H1 (cell line): ENCODE measurements at regions of chr21 and their contacts with region 1.

Region 1: DNA sequence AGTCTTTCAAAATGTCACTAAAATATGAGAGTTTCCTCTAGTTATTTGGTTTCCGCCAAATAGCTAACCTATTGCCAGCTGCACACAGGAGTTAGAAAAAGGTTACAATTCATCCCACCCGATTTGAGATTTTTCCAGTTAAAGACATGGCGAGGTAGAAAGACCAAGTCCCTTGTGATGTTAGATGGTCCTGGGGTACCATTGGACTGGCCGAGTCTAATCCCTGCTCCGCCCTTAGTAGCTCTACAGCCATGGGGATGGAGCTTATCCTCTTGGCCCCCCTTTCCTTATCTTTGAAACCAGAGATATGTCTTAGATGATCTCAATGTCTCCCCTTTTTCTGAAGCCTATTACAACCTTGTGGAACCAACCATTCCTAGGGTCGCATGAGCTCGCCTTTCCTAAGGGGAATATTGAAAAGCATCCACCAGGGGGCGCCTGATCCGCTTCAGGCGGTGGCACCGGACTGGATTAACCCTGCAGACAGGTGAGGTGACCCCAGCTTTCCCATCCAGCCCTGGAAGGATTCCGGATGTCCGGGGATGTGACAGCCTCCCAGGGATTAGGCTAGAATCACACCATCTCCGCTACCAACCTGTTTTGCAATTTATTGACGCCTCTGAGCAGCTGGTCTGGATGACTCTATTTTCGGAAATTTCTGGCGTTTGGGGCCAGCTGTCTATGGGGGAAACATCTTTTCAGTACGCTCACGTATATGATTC is 68.3 kb upstream of the SIM2 start:
- DNase-seq: peak; percentile 64 to 96
- H3K4me3 ChIP-seq: no peak overlapping the region
- H3K27ac ChIP-seq: no peak overlapping the region
- H3K4me1 ChIP-seq: no peaks in the 10 kb centered on the region
- H3K27me3 ChIP-seq: peaks cover 0 to 7% (median 0%) of the 10 kb centered on the region in 4 experiments; a peak in 2 of 7 replicates
- CTCF ChIP-seq: peak; percentile 82 to 88 (median 84)
- EP300 ChIP-seq: no peak
- POLR2A ChIP-seq: no peak
- RAD21 ChIP-seq: peak; percentile 74 to 79

Region 2: GRCh38 chr21:36587382-36587781 is 43.3 kb before region 1 on chr21:
- CTCF ChIA-PET with region 1: interaction called, 12 read pairs
- POLR2A ChIA-PET with region 1: no interaction called
- DNase-seq: no peak
- H3K4me3 ChIP-seq: no peak overlapping the region
- H3K27ac ChIP-seq: no peak overlapping the region
- H3K4me1 ChIP-seq: no peaks in the 10 kb centered on the region
- H3K27me3 ChIP-seq: no peaks in the 10 kb centered on the region
- CTCF ChIP-seq: no peak
- EP300 ChIP-seq: no peak
- POLR2A ChIP-seq: no peak
- RAD21 ChIP-seq: no peak

Region 3: DNA sequence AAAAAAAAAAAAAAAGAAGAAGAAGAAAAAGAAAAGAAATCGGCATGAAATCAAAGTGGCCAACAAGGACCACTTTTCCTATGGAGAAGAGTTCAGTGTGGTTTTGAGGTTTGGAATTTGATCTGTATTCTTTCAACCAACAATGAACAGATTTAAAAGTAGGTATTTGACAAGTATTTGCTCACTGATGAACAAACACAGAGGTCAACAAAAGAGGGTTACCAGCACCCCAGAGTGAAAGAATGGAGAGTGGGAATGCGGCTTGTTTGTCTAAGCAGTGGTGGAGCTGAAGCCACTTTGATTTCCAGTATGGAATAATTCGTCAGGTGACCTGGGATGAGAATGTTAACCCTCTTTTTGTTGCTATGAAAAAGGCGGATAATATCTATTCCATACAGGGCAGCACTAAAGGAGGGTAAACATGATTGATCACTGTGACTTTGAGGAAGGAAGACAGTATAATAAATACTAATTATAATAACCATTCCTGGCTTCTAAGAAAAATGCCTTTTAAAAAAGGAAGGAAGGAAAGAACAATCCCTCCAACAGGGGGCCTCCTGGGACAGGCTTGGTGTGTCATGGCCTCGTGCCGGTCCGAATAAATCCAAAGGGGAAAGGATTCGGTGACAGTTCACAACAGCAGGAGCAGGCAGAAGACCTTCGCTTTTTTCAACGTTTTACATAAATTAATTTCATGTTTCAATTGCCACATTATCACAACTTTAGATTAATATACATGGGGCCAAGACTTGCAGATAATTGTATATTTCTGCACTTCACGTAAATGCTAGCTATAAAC is 31.1 kb after region 1 on chr21:
- CTCF ChIA-PET with region 1: interaction called, 17 read pairs
- POLR2A ChIA-PET with region 1: no interaction called
- DNase-seq: no peak
- H3K4me3 ChIP-seq: no peak overlapping the region
- H3K27ac ChIP-seq: no peak overlapping the region
- H3K4me1 ChIP-seq: no peaks in the 10 kb centered on the region; a peak in 1 of 7 replicates
- H3K27me3 ChIP-seq: no peaks in the 10 kb centered on the region
- CTCF ChIP-seq: peak; percentile 56 to 62 (median 56)
- EP300 ChIP-seq: no peak
- POLR2A ChIP-seq: no peak
- RAD21 ChIP-seq: peak; percentile 61 to 62

Region 4: GRCh38 chr21:36706951-36707762 is 76.5 kb after region 1 on chr21:
- CTCF ChIA-PET with region 1: interaction called, 10 read pairs
- POLR2A ChIA-PET with region 1: no interaction called
- DNase-seq: peak in 1 of 2 experiments; percentile 64
- H3K4me3 ChIP-seq: peak overlapping the region in 2 of 4 experiments; percentile 0 to 57; a peak in 2 of 8 replicates
- H3K27ac ChIP-seq: no peak overlapping the region
- H3K4me1 ChIP-seq: peaks cover 0 to 41% (median 32%) of the 10 kb centered on the region in 4 experiments; a peak in 6 of 7 replicates
- H3K27me3 ChIP-seq: peaks cover 76 to 98% (median 85%) of the 10 kb centered on the region in 4 experiments
- CTCF ChIP-seq: no peak
- EP300 ChIP-seq: no peak
- POLR2A ChIP-seq: no peak
- RAD21 ChIP-seq: peak; percentile 2 to 6; a peak in 1 of 4 replicates